Heart right ventricle (tissue), 16 donors: ENCODE measurements at regions of chr13 and their contacts with region 1.

Region 1: GRCh38 chr13:113393563-113394338 is 29.8 kb upstream of the GRTP1 start:
- DNase-seq: peak; percentile 67 to 84
- ATAC-seq: peak; percentile 77 to 93 (median 85)
- H3K4me3 ChIP-seq: peak overlapping the region; percentile 68 to 97 (median 81)
- H3K27ac ChIP-seq: peak overlapping the region in 9 of 10 donors; percentile 64 to 87 (median 81)
- H3K4me1 ChIP-seq: peaks cover 0 to 28% (median 11%) of the 10 kb centered on the region in 9 donors
- H3K27me3 ChIP-seq: no peaks in the 10 kb centered on the region
- CTCF ChIP-seq: peak; percentile 77 to 98 (median 89)

Region 2: GRCh38 chr13:113296842-113297369 is 96.8 kb before region 1 on chr13 and contains the start of gene LAMP1:
- intact Hi-C with region 1: loop called in 1 of 10 experiments (anchors 5 kb)
- DNase-seq: peak; percentile 97 to 100
- ATAC-seq: peak; percentile 95 to 97 (median 96)
- H3K4me3 ChIP-seq: peak within 1 kb of the TSS; percentile 68 to 95 (median 82)
- H3K27ac ChIP-seq: peak within 1 kb of the TSS; percentile 25 to 96 (median 86)
- H3K4me1 ChIP-seq: peaks cover 0 to 49% (median 25%) of the 10 kb centered on the region in 9 donors
- H3K27me3 ChIP-seq: peaks cover 0 to 7% (median 0%) of the 10 kb centered on the region in 7 donors
- CTCF ChIP-seq: no peak
- total RNA-seq, gene LAMP1: 80.4 to 153 (median 101) TPM